ENCODE measurements at regions of chr14 and their contacts with region 1.

Region 1: GRCh38 chr14:73452341-73453186 is 5.8 kb downstream of the NUMB start:
- DNase-seq: no peak
- H3K4me3 ChIP-seq: no peak overlapping the region
- H3K27ac ChIP-seq: peak overlapping the region in 1 of 2 experiments; percentile 70; a peak in 2 of 4 replicates
- H3K4me1 ChIP-seq: peaks cover 6 to 33% of the 10 kb centered on the region in 2 experiments; a peak in 3 of 4 replicates
- H3K27me3 ChIP-seq: no peaks in the 10 kb centered on the region
- CTCF ChIP-seq: no peak
- EP300 ChIP-seq: no peak
- RAD21 ChIP-seq: no peak

Region 2: DNA sequence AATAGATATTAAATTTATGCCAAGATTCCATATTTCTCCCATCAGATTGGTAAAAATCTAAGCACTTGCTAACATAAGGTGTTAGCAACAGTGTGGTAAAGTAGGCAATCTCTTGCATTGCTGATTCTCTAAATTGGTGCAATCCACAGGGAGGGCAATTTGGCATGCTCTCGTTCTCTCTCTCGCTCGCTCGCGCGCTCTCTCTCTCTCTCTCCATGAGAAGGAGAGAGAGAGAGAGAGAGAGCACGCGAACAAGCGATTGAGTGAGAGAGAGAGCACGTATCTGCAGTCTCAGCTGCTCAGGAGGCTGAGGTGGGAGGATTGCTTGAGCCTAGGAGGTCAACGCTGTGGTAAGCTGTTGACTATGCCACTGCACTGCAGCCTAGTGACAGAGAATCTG is 290.3 kb before region 1 on chr14:
- CTCF ChIA-PET with region 1: no interaction called
- POLR2A ChIA-PET with region 1: no interaction called
- DNase-seq: no peak
- H3K4me3 ChIP-seq: no peak overlapping the region
- H3K27ac ChIP-seq: no peak overlapping the region
- H3K4me1 ChIP-seq: no peaks in the 10 kb centered on the region
- H3K27me3 ChIP-seq: no peaks in the 10 kb centered on the region
- CTCF ChIP-seq: no peak
- EP300 ChIP-seq: no peak
- RAD21 ChIP-seq: no peak

Region 3: DNA sequence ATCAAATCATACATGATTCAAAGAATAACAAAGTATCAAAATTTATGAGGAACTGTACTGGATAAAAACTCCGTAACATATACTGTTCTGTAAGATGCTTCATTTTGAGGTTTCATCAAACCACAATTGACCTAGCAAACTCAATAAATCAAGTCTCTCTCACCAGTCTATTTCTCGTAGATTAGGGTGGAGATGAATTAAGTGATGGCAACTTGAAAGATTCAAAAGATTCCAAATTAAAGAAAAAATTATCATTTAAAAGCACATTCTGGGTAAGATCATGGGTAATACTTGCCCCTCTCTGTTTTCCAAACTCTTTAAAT is 140.9 kb before region 1 on chr14:
- CTCF ChIA-PET with region 1: no interaction called
- POLR2A ChIA-PET with region 1: no interaction called
- DNase-seq: no peak
- H3K4me3 ChIP-seq: no peak overlapping the region
- H3K27ac ChIP-seq: peak overlapping the region in 1 of 2 experiments; percentile 53; a peak in 2 of 4 replicates
- H3K4me1 ChIP-seq: peaks cover 0 to 9% of the 10 kb centered on the region in 2 experiments; a peak in 1 of 4 replicates
- H3K27me3 ChIP-seq: no peaks in the 10 kb centered on the region
- CTCF ChIP-seq: no peak
- EP300 ChIP-seq: no peak
- RAD21 ChIP-seq: no peak

Region 4: DNA sequence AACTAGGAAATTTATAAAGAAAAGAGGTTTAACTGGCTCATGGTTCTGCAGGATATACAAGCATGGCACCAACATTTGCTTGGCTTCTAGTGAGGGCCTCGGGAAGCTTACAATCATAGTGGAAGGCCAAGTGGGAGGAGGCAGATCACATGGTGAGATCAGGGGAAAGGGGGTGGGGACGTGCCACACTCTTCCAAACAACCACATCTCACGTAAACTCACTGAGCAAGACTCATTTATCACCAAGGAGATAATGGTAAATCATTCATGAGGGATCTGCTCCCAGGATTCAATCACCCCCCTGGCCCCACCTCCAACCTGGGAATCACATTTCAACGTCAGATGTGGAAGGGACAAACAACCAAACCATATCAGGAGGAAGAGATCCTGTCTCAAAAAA is 30.0 kb before region 1 on chr14:
- CTCF ChIA-PET with region 1: no interaction called
- POLR2A ChIA-PET with region 1: no interaction called
- DNase-seq: no peak
- H3K4me3 ChIP-seq: no peak overlapping the region
- H3K27ac ChIP-seq: no peak overlapping the region
- H3K4me1 ChIP-seq: peaks cover 0 to 4% of the 10 kb centered on the region in 2 experiments; a peak in 1 of 4 replicates
- H3K27me3 ChIP-seq: no peaks in the 10 kb centered on the region
- CTCF ChIP-seq: no peak
- EP300 ChIP-seq: no peak
- RAD21 ChIP-seq: no peak

Region 5: GRCh38 chr14:73437206-73437605 is 15.4 kb before region 1 on chr14:
- CTCF ChIA-PET with region 1: no interaction called
- POLR2A ChIA-PET with region 1: no interaction called
- DNase-seq: no peak
- H3K4me3 ChIP-seq: no peak overlapping the region
- H3K27ac ChIP-seq: no peak overlapping the region
- H3K4me1 ChIP-seq: peaks cover 2 to 7% of the 10 kb centered on the region in 2 experiments; a peak in 3 of 4 replicates
- H3K27me3 ChIP-seq: no peaks in the 10 kb centered on the region
- CTCF ChIP-seq: no peak
- EP300 ChIP-seq: no peak
- RAD21 ChIP-seq: no peak

Region 6: DNA sequence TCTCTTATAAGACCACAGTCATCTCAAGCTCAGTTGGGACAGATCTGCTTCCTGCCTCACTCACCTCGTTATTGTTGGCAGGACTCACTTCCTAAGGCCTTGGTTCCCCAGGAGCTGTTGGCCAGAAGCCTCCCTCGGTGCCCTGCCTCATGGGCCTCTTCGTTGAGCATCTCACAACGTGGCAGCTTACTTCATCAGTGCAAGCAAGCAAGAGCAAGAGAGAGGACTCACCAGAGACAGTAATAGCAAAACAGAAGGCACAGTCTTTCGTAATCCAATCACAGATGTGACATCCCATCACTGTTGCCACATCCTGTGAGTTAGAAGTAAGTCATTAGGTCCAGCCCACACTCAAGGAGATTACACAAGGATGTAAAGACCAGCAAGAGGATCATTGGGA is 10.8 kb after region 1 on chr14:
- CTCF ChIA-PET with region 1: interaction called, 11 read pairs
- POLR2A ChIA-PET with region 1: interaction called, 4 read pairs
- DNase-seq: no peak
- H3K4me3 ChIP-seq: peak overlapping the region in 1 of 2 experiments; percentile 41; a peak in 2 of 4 replicates
- H3K27ac ChIP-seq: peak overlapping the region; percentile 78 to 99
- H3K4me1 ChIP-seq: peaks cover 32 to 49% of the 10 kb centered on the region in 2 experiments
- H3K27me3 ChIP-seq: no peaks in the 10 kb centered on the region
- CTCF ChIP-seq: no peak
- EP300 ChIP-seq: no peak
- RAD21 ChIP-seq: no peak

Measured in SK-N-SH (cell line).